Pancreas (tissue), 10 donors: ENCODE measurements at regions of chr2 and their contacts with region 1.

Region 1: GRCh38 chr2:43898134-43898837 is 59.5 kb downstream of the ABCG8 start:
- DNase-seq: peak; percentile 59 to 86 (median 68)
- ATAC-seq: peak; percentile 94 to 99 (median 98)
- H3K4me3 ChIP-seq: no peak overlapping the region
- H3K27ac ChIP-seq: peak overlapping the region in 3 of 4 donors; percentile 11 to 41 (median 24)
- H3K4me1 ChIP-seq: peaks cover 9 to 11% (median 9%) of the 10 kb centered on the region in 3 donors
- H3K27me3 ChIP-seq: no peaks in the 10 kb centered on the region
- CTCF ChIP-seq: peak in 3 of 4 donors; percentile 17 to 50 (median 22)

Region 2: GRCh38 chr2:43826305-43827250 is 71.7 kb before region 1 on chr2:
- intact Hi-C with region 1: loop called in 1 of 3 experiments (anchors 10 kb)
- DNase-seq: no peak
- ATAC-seq: no peak
- H3K4me3 ChIP-seq: no peak overlapping the region
- H3K27ac ChIP-seq: no peak overlapping the region
- H3K4me1 ChIP-seq: no peaks in the 10 kb centered on the region
- H3K27me3 ChIP-seq: no peaks in the 10 kb centered on the region
- CTCF ChIP-seq: no peak

Region 3: GRCh38 chr2:44016282-44016681 is 118.0 kb after region 1 on chr2:
- intact Hi-C with region 1: no loop called
- DNase-seq: peak in 4 of 6 donors; percentile 28 to 70 (median 36)
- ATAC-seq: peak in 2 of 4 donors; percentile 53 to 83
- H3K4me3 ChIP-seq: no peak overlapping the region
- H3K27ac ChIP-seq: no peak overlapping the region
- H3K4me1 ChIP-seq: no peaks in the 10 kb centered on the region
- H3K27me3 ChIP-seq: no peaks in the 10 kb centered on the region
- CTCF ChIP-seq: no peak